Activated CD4-positive, alpha-beta T cell treated with anti-CD3 and anti-CD28 coated beads for 36 hours (primary cell): ENCODE measurements at regions of chr1 and their contacts with region 1.

Region 1: GRCh38 chr1:152459596-152460528 is 45.8 kb upstream of the CRNN start:
- DNase-seq: peak; percentile 88
- ATAC-seq: peak; percentile 89
- H3K4me3 Mint-ChIP-seq: peak overlapping the region; percentile 52
- H3K27ac Mint-ChIP-seq: peak overlapping the region; percentile 72
- H3K4me1 Mint-ChIP-seq: peaks cover 31% of the 10 kb centered on the region
- H3K27me3 Mint-ChIP-seq: peaks cover 2% of the 10 kb centered on the region

Region 2: DNA sequence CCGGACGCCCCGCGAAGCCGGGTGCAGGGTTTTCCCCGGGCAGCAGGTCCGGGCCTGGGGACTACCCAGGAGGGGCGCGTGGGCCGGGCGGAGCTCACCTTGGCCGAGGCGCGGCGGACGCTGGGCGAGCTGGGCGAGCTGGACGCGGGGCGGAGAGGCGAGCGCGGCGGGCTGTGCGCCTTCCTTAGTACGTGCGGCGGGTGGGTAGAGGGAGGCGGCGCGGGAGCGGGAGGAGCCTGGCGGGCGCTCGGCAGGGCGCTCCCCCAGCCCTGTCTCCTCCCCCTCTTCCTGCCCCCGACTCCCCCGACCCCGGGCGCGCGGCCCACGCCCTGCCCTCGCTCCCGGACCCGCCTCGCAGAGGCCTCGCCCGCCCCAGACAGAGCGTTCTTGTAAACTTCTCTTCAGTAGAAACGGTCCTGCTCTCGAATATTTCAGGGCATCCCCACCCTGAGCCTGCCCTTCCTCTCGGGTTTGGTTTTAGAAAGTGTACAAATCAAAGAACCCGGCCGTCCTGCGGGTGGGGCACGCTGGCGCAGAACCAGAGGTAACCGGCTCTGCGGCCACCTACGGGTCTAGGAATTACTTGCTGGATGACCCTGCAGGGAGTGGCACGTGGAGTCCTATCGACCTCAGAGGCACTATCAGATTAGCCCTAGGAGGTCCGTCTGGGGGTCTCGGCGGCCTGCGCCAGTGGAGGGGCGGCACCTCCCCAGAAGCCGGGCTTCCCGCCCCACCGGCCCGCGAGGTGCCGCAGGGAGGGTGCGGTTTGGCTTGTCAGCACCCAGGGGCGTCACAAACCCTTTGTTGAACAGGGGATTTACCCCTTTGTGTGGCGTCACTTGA is 466.0 kb before region 1 on chr1 and contains the start of gene S100A10:
- CTCF ChIA-PET with region 1: no interaction called
- POLR2A ChIA-PET with region 1: no interaction called
- intact Hi-C with region 1: no loop called
- DNase-seq: peak; percentile 85
- ATAC-seq: peak; percentile 79
- H3K4me3 Mint-ChIP-seq: peak within 1 kb of the TSS; percentile 90
- H3K27ac Mint-ChIP-seq: peak within 1 kb of the TSS; percentile 94
- H3K4me1 Mint-ChIP-seq: peaks cover 48% of the 10 kb centered on the region
- H3K27me3 Mint-ChIP-seq: no peaks in the 10 kb centered on the region
- total RNA-seq, gene S100A10: 230 to 246 TPM

Region 3: DNA sequence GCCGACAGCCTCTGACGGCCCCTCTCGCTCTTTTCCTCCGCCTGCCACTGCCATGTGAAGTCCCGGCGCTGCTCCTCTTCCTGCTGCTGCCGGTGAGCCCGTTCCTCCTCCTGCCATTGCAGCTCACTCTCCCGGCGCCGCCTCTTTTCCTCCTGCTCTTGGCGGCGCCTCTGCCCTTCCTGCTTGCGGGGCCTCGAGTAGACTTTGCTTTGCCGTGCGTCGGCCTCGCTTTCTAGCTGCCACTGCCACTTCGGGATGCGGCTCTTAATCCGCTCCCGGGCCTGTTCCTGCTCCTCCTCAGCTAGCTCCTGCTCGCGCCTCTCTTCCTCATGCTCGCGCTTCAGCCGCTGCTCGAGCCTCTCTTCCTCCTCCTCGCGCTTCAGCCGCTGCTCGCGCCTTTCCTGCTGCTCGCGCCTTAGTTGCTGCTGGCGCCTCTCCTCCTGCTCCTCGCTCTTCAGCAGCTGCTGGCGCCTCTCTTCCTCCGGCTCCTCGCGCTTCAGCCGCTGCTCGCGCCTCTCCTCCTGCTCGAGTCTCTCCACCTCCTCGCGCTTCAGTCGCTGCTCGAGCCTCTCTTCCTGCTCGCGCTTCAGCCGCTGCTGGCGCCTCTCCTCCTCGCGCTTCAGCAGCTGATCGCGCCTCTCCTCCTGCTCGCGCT is 348.9 kb before region 1 on chr1:
- CTCF ChIA-PET with region 1: interaction called, 31 read pairs
- POLR2A ChIA-PET with region 1: interaction called, 7 read pairs
- intact Hi-C with region 1: no loop called
- DNase-seq: peak; percentile 65
- ATAC-seq: peak; percentile 63
- H3K4me3 Mint-ChIP-seq: no peak overlapping the region
- H3K27ac Mint-ChIP-seq: no peak overlapping the region
- H3K4me1 Mint-ChIP-seq: no peaks in the 10 kb centered on the region
- H3K27me3 Mint-ChIP-seq: peaks cover 13% of the 10 kb centered on the region

Region 4: DNA sequence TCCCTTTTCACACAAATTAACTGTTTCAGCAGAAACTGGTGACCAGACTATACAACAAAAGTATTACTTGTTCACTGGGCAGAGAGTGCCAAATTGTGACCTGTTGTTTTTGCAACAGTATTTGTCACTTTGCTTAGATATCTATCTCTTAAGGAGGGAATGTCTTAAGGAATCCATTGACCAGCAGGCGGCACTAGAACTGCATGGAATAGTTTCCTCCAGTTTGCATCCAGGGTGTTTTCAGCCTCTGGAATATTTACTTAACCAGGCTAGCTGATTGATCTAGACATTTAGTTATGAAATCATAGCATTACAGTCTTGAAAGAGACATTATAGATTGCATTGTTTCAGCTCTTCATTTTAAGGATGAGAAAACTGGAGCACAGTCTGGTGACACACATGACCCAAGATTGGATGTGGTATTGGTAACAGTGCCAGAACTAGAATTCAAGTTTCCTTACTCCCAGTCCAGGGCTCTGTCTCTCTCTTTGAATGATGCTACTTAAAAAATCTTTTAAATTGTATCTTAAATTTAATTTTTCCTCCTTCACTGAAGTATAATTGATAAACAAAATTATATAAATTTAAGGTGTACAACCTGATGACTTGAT is 317.8 kb before region 1 on chr1:
- CTCF ChIA-PET with region 1: interaction called, 9 read pairs
- POLR2A ChIA-PET with region 1: no interaction called
- intact Hi-C with region 1: loop called in 1 of 2 experiments (anchors 2 kb)
- DNase-seq: peak; percentile 55
- ATAC-seq: no peak
- H3K4me3 Mint-ChIP-seq: no peak overlapping the region
- H3K27ac Mint-ChIP-seq: no peak overlapping the region
- H3K4me1 Mint-ChIP-seq: peaks cover 11% of the 10 kb centered on the region
- H3K27me3 Mint-ChIP-seq: peaks cover 50% of the 10 kb centered on the region

Region 5: DNA sequence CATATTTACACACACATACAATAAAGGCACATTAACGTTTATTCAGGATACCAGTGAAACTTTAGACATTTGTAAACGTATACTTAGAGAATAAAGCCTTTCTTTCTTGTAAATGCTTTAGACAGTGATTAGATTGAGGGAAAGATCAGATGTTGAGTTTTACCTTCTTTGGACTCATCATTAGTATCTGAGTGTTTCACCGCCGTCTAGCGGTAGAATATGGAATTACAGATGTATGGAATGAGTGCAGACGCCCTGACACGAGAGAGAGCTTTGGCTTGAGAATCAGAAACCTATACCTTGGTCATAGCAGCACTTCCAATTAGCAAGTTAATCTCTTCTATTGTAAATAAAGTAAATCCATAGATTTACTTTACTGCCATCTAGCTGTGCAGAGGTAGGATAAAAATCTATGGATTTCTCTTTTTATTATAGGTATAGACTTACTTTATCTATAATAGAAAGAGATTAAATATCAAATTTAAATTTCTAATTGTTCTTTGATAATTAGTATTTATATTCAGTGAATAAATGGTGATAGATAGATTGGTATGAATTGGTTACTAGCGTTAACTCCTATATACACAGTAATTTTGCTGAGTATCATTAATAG is 112.6 kb before region 1 on chr1:
- CTCF ChIA-PET with region 1: interaction called, 30 read pairs
- POLR2A ChIA-PET with region 1: no interaction called
- intact Hi-C with region 1: loop called (anchors 1 to 2 kb)
- DNase-seq: peak; percentile 60
- ATAC-seq: peak; percentile 73
- H3K4me3 Mint-ChIP-seq: no peak overlapping the region
- H3K27ac Mint-ChIP-seq: no peak overlapping the region
- H3K4me1 Mint-ChIP-seq: peaks cover 7% of the 10 kb centered on the region
- H3K27me3 Mint-ChIP-seq: peaks cover 22% of the 10 kb centered on the region

Region 6: DNA sequence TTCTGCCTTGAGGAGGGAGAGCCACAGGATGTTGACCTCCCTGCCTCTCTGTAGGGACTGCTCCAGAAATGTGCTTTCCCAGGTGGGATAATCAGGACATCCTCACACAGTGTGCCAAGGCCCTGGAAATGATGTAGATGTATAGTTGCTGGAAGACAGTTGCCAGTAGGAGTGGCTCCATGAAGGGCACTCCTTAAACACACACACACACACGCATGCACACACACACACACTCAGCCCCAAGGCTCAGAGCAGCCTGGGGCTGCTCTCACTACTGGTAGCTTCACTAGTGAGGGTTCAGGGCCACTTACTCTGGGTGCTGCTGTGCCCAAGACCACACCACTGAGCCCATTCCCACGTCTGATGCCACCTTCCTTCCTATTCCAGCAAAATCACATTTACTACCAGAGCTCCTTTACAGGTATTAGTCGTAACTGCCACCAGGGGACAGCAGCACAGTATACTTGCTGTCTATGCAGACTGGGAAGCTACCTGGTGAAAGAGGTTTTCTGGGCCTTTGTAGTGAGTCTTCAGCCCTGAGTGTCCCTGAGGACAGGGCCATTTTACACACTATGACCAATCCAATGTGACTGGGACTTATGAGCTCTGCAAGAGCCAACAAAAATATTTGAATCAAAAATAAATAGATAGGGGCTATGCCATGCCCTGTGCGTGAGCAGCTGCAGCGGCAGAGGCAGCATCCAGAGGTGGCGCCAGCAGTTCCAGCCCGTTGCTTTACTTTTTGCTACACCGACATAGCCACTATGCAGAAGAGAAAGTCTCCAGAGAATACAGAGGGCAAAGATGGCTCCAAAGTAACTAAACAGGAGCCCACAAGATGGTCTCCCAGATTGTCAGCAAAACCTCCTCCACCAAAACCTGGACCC is 60.8 kb before region 1 on chr1:
- CTCF ChIA-PET with region 1: interaction called, 34 read pairs
- POLR2A ChIA-PET with region 1: no interaction called
- intact Hi-C with region 1: loop called in 1 of 2 experiments (anchors 5 kb)
- DNase-seq: peak; percentile 30
- ATAC-seq: no peak
- H3K4me3 Mint-ChIP-seq: no peak overlapping the region
- H3K27ac Mint-ChIP-seq: no peak overlapping the region
- H3K4me1 Mint-ChIP-seq: peaks cover 8% of the 10 kb centered on the region
- H3K27me3 Mint-ChIP-seq: peaks cover 8% of the 10 kb centered on the region

Region 7: DNA sequence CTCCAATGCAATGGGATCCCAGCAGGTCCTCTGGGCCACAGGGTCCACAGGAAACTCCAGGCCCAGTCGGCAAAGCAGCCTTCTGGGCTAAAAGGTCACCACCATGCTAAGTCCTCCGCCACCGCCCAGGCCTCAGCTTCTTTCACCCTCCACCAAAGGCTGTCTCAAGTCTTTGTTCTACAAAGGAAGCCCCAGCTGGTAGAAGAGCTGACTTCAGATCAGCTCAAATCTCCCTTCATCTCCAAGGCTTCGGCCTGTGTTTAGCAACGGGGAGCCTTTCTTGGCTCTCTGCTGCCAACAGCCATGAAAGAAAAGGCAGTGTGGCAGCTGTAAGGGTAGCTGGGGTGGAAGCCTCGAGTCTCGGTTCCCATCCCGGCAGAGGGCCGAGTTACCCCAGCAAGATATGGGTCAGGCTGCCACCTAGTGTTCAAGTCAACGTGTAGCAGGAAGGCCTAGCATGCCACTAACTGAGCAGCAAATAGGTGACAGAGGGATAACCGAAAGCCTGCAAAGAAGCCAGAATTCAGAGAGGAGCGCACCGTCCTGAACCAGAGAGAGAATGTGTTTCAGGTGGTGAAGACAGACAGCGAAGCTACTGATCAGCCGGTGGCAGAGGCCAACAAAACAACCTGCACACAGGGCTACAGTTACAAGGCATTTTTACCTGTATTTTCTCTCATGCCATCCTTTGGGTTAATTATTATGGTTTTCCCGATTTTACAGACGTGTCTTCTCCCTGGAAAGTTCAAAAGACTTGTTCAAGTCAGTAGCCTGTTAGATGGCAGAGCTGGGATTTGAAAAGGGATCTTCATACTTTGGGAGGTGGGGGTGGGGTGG is 19.0 kb before region 1 on chr1:
- CTCF ChIA-PET with region 1: interaction called, 104 read pairs
- POLR2A ChIA-PET with region 1: no interaction called
- intact Hi-C with region 1: no loop called
- DNase-seq: peak; percentile 81
- ATAC-seq: peak; percentile 99
- H3K4me3 Mint-ChIP-seq: no peak overlapping the region
- H3K27ac Mint-ChIP-seq: no peak overlapping the region
- H3K4me1 Mint-ChIP-seq: no peaks in the 10 kb centered on the region
- H3K27me3 Mint-ChIP-seq: peaks cover 19% of the 10 kb centered on the region

Region 8: GRCh38 chr1:152473887-152474537 is 14.2 kb after region 1 on chr1:
- CTCF ChIA-PET with region 1: interaction called, 21 read pairs
- POLR2A ChIA-PET with region 1: no interaction called
- intact Hi-C with region 1: no loop called
- DNase-seq: no peak
- ATAC-seq: no peak
- H3K4me3 Mint-ChIP-seq: no peak overlapping the region
- H3K27ac Mint-ChIP-seq: no peak overlapping the region
- H3K4me1 Mint-ChIP-seq: no peaks in the 10 kb centered on the region
- H3K27me3 Mint-ChIP-seq: peaks cover 6% of the 10 kb centered on the region